ENCODE measurements at regions of chr1 and their contacts with region 1.

Region 1: DNA sequence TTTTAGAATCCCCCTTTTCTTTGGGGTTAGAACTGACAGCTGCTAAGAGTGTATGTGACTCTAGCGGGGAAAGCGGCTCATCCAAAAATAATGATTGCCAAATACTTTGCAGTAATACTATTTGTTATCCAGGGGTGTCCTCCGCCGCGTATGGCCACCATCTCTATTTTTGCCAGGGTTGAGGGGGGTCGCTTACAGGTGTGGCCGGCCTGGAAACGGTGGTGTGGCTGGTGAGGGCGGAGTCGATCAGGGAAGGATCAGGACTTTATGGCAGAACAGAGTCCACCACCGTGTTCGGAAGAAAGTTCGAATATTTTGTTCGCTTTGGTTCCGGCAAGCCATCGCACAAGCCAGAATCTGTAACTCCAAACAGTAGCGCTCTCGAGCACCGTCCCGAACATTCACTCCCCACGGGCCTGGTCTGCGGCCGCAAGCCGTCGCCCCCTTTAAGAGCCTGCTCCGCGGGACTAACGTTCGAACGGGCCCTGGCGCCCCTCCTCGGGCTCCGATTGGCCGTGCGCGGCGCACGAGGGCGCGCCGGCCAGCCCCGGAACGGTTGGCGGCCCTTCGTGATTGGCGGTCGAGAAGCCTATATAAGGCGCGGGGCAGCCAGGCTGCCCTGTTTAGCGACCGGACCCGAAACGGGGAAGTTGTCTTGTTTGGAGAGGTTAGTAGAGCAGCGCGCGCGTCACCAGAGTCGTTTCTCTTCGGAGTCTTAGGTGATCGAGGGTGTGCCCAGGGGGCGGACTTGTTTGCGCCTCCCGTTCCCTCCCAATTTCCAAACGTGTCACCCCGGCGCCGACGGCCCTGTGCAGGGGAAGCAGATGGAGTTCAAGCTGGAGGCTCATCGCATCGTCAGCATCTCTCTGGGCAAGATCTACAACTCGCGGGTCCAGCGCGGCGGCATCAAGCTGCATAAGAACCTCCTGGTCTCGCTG is at the start of gene IER5:
- DNase-seq: peak; percentile 90 to 98
- H3K4me3 ChIP-seq: peak within 1 kb of the TSS; percentile 91
- H3K27ac ChIP-seq: peak within 1 kb of the TSS; percentile 92
- H3K4me1 ChIP-seq: peaks cover 39% of the 10 kb centered on the region
- H3K27me3 ChIP-seq: no peaks in the 10 kb centered on the region
- CTCF ChIP-seq: 0 out of 2 replicates have a peak, but pooled peaks have one; percentile 20
- total RNA-seq, gene IER5: 21.2 and 23.4 TPM in 2 replicates

Region 2: DNA sequence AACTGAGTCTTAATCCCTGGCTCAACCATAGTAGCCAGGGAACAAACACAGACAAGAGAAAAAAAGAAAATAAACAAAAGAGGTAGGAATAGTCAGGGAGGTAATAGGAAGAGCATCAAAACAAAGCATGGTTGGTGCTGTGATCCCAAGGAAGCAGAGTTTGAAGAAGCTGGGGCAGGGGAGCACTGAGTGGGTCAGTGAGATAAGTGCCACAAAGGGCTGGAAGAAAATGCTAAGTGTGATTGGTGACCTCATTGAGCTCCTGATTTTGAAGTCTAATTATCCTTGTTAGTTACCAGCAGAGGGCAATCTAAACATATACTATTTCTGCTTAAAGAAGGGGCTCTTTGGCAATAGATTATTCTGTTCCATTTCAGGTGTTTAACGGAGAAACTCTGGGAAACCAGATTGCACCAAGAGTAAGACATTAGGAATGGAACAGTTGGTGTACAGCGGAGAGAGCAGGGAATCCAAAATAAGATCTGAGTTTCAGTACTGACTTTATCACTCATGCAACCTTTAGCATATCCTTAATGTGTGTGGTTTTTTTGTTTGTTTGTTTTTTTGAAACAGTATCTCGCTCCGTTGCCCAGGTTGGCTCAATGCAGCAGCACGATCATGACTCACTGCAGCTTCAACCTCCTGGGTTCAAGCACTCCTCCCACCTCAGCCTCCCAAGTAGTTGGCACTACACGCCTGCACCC is 206.4 kb before region 1 on chr1:
- CTCF ChIA-PET with region 1: no interaction called
- POLR2A ChIA-PET with region 1: interaction called, 4 read pairs
- intact Hi-C with region 1: loop called (anchors 5 kb)
- DNase-seq: peak; percentile 1 to 53
- H3K4me3 ChIP-seq: no peak overlapping the region
- H3K27ac ChIP-seq: no peak overlapping the region
- H3K4me1 ChIP-seq: no peaks in the 10 kb centered on the region
- H3K27me3 ChIP-seq: no peaks in the 10 kb centered on the region
- CTCF ChIP-seq: peak; percentile 75

Region 3: GRCh38 chr1:181038399-181038873 is 49.9 kb before region 1 on chr1:
- CTCF ChIA-PET with region 1: no interaction called
- POLR2A ChIA-PET with region 1: interaction called, 6 read pairs
- intact Hi-C with region 1: loop called (anchors 1 kb)
- DNase-seq: peak; percentile 60 to 62
- H3K4me3 ChIP-seq: no peak overlapping the region
- H3K27ac ChIP-seq: no peak overlapping the region
- H3K4me1 ChIP-seq: peaks cover 21% of the 10 kb centered on the region
- H3K27me3 ChIP-seq: no peaks in the 10 kb centered on the region
- CTCF ChIP-seq: peak; percentile 82

Region 4: GRCh38 chr1:181105134-181106021 is 17.0 kb after region 1 on chr1:
- CTCF ChIA-PET with region 1: interaction called, 3 read pairs
- POLR2A ChIA-PET with region 1: interaction called, 10 read pairs
- intact Hi-C with region 1: loop called (anchors 1 kb)
- DNase-seq: peak; percentile 69 to 94
- H3K4me3 ChIP-seq: peak overlapping the region; percentile 64
- H3K27ac ChIP-seq: peak overlapping the region; percentile 96
- H3K4me1 ChIP-seq: peaks cover 70% of the 10 kb centered on the region
- H3K27me3 ChIP-seq: no peaks in the 10 kb centered on the region
- CTCF ChIP-seq: no peak

Region 5: DNA sequence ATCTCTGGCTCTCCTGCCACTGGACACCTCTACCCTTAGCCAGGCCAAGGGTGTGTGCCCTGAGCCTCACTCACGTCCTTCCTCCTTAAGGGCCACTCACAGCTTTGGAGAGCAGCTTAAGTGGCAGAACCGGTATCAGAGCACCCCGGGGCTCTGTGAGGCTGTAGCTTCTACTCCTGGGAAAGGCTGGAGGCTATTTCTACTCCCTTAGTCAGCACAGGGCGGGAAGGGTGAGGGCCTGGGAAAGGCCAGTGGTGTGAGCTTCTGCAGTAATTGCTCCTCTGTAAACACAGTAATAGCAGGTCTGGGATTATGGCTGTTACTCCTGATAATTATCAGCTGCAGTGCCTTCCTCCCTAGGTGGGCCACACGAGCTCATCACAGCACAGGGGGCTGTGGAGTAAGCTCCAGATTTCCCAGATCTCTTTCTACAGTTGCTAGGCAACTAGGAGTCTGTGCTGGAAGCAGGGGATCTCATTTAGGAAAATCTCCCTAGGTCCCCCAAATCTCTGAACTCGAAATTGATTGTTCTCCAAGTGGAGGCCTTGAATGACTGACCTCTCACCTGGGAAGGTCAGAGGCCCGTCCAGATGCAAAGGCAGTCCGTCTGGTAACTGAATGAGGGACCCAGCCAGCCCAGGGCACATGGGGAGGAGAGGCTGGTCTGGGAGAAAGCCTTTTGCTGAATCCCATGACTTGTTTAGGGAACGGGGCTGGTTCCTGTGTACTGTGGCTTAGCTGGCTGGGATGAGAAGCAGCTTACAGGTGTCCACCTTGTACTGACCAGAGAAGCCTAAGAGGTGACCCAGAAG is 29.5 kb after region 1 on chr1:
- CTCF ChIA-PET with region 1: no interaction called
- POLR2A ChIA-PET with region 1: interaction called, 10 read pairs
- intact Hi-C with region 1: loop called (anchors 1 kb)
- DNase-seq: peak; percentile 95 to 100
- H3K4me3 ChIP-seq: peak overlapping the region; percentile 37; the same call in 1 of the 2 replicates
- H3K27ac ChIP-seq: peak overlapping the region; percentile 99
- H3K4me1 ChIP-seq: peaks cover 95% of the 10 kb centered on the region
- H3K27me3 ChIP-seq: no peaks in the 10 kb centered on the region
- CTCF ChIP-seq: no peak

Region 6: GRCh38 chr1:181142096-181142958 is 54.0 kb after region 1 on chr1:
- CTCF ChIA-PET with region 1: interaction called, 11 read pairs
- POLR2A ChIA-PET with region 1: interaction called, 5 read pairs
- intact Hi-C with region 1: loop called (anchors 1 kb)
- DNase-seq: peak; percentile 84 to 88
- H3K4me3 ChIP-seq: peak overlapping the region; percentile 4; the same call in 1 of the 2 replicates
- H3K27ac ChIP-seq: peak overlapping the region; percentile 92
- H3K4me1 ChIP-seq: peaks cover 59% of the 10 kb centered on the region
- H3K27me3 ChIP-seq: no peaks in the 10 kb centered on the region
- CTCF ChIP-seq: peak; percentile 97

Region 7: DNA sequence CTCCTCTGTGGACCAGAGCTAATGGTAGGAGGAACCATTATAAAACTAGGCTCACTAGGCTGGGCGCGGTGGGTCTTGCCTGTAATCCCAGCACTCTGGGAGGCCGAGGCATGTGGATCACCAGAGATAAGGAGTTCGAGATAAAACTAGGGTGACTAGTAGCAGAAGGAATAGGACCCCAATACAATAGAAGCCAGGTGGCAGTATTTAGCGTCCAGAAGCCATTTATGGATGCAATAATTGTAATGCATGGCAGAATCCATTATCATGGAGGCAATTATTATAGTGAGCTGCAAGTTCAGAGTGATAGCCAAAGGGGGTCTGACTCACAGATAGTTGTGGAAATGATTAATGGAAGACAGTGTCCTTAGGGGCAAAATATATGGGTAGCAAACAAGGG is 144.2 kb after region 1 on chr1:
- CTCF ChIA-PET with region 1: no interaction called
- POLR2A ChIA-PET with region 1: no interaction called
- intact Hi-C with region 1: no loop called
- DNase-seq: no peak
- H3K4me3 ChIP-seq: no peak overlapping the region
- H3K27ac ChIP-seq: no peak overlapping the region
- H3K4me1 ChIP-seq: no peaks in the 10 kb centered on the region
- H3K27me3 ChIP-seq: peaks cover 33% of the 10 kb centered on the region; the same call in 1 of the 2 replicates
- CTCF ChIP-seq: no peak

Region 8: GRCh38 chr1:181296180-181296579 is 207.8 kb after region 1 on chr1:
- CTCF ChIA-PET with region 1: no interaction called
- POLR2A ChIA-PET with region 1: no interaction called
- intact Hi-C with region 1: no loop called
- DNase-seq: no peak
- H3K4me3 ChIP-seq: no peak overlapping the region
- H3K27ac ChIP-seq: no peak overlapping the region
- H3K4me1 ChIP-seq: no peaks in the 10 kb centered on the region
- H3K27me3 ChIP-seq: 0 out of 2 replicates have a peak, but pooled peaks cover 15% of the 10 kb centered on the region
- CTCF ChIP-seq: no peak